Activated T-helper 2 cell treated with anti-CD3 and anti-CD28 coated beads, Interferon-gamma antibody, Interleukin-2, Interleukin-4, amounts not matched to agents 10 μg/mL and 5 μg/mL and 100 μg/mL, durations not matched to agents 14 hours and 24 hours and 36 hours (primary cell): ENCODE measurements at regions of chr5 and their contacts with region 1.

Region 1: GRCh38 chr5:115460472-115460871 is 84.1 kb downstream of the FEM1C start:
- DNase-seq: no peak
- H3K4me3 Mint-ChIP-seq: no peak overlapping the region
- H3K27ac Mint-ChIP-seq: no peak overlapping the region
- H3K4me1 Mint-ChIP-seq: peaks cover 6% of the 10 kb centered on the region
- H3K27me3 Mint-ChIP-seq: peaks cover 34% of the 10 kb centered on the region

Region 2: GRCh38 chr5:115377468-115378217 is 82.8 kb before region 1 on chr5:
- intact Hi-C with region 1: loop called (anchors 2 kb)
- DNase-seq: no peak
- H3K4me3 Mint-ChIP-seq: no peak overlapping the region
- H3K27ac Mint-ChIP-seq: no peak overlapping the region
- H3K4me1 Mint-ChIP-seq: peaks cover 20% of the 10 kb centered on the region
- H3K27me3 Mint-ChIP-seq: no peaks in the 10 kb centered on the region

Region 3: DNA sequence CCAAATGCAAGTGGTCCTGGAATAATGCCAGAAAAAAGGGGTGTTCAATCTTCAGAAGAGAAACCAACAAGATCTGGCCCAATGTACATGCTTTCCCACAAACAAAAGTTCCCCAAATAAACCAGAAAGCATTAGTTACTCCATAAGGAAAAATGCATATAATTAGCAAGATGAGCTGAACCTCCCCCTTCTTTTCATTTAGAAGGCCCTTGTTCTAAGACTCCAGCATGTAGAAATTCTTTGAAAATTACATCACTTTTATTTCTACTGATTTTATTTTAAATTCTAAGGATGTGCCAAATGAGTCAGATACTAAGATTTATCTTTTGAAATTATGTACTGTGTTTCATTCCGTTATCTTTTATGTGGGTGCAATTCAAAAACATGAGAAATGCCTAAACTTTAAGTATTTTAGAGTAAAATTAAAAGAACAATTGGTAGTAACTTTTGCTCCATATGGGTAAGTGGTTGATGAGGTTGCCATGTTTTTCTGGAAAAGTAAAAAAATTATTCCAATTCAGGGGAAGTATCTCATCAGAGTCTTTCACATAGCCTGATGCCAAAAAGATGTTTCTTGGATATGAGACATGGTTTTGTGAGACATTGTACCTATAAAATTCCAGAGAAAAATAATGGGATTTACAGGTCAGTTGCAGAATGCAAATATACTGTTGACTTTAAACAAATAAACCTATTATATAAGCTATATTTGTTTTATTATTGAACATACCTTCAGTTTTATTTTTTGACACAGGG is 57.5 kb before region 1 on chr5:
- intact Hi-C with region 1: no loop called
- DNase-seq: no peak
- H3K4me3 Mint-ChIP-seq: no peak overlapping the region
- H3K27ac Mint-ChIP-seq: no peak overlapping the region
- H3K4me1 Mint-ChIP-seq: no peaks in the 10 kb centered on the region
- H3K27me3 Mint-ChIP-seq: peaks cover 18% of the 10 kb centered on the region

Region 4: GRCh38 chr5:115487756-115488155 is 27.3 kb after region 1 on chr5:
- intact Hi-C with region 1: loop called (anchors 1 kb)
- DNase-seq: no peak
- H3K4me3 Mint-ChIP-seq: no peak overlapping the region
- H3K27ac Mint-ChIP-seq: peak overlapping the region; percentile 70
- H3K4me1 Mint-ChIP-seq: peaks cover 16% of the 10 kb centered on the region
- H3K27me3 Mint-ChIP-seq: peaks cover 5% of the 10 kb centered on the region

Region 5: DNA sequence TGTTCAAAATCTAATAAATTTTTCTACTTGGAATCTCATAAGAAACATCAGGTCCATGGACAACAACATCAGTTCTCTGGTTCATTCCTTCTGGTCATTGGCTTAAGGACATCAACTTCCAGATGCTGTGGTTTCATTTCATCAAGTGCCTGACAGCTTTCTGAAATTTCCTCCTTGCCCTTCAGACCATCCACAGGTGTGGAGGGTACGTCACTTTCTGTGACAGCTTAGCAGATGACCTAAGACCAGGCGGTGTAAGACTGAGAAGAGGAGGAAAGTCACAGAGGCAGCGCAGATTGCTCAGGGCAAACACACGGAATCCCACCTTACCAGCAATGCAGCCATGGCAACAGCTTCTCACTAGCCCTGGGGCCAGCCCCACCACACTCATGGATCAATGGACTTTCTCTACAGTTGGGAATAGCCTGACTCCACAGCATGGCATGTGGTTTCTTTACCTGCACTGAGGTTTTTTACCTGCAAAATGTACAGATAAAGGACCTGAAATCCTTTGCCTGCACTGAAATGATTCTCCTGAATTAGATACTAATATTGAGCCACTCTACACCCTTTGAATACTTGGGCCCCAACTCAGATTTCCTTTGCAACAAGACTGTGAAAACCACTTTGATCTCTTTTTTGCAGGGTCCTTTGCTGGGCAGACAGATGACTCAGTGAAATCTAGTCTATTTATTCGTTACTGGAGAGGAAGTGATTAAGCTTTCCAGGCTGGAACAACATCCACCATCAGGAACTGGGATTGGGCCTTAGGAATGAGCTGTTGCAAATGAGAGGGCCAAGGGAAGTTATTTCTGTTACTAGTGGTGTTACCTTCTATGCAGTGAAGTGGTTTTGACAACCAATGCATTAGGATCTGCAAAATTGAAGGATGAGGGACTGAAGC is 114.9 kb after region 1 on chr5:
- intact Hi-C with region 1: no loop called
- DNase-seq: no peak
- H3K4me3 Mint-ChIP-seq: no peak overlapping the region
- H3K27ac Mint-ChIP-seq: no peak overlapping the region
- H3K4me1 Mint-ChIP-seq: no peaks in the 10 kb centered on the region
- H3K27me3 Mint-ChIP-seq: peaks cover 21% of the 10 kb centered on the region

Region 6: DNA sequence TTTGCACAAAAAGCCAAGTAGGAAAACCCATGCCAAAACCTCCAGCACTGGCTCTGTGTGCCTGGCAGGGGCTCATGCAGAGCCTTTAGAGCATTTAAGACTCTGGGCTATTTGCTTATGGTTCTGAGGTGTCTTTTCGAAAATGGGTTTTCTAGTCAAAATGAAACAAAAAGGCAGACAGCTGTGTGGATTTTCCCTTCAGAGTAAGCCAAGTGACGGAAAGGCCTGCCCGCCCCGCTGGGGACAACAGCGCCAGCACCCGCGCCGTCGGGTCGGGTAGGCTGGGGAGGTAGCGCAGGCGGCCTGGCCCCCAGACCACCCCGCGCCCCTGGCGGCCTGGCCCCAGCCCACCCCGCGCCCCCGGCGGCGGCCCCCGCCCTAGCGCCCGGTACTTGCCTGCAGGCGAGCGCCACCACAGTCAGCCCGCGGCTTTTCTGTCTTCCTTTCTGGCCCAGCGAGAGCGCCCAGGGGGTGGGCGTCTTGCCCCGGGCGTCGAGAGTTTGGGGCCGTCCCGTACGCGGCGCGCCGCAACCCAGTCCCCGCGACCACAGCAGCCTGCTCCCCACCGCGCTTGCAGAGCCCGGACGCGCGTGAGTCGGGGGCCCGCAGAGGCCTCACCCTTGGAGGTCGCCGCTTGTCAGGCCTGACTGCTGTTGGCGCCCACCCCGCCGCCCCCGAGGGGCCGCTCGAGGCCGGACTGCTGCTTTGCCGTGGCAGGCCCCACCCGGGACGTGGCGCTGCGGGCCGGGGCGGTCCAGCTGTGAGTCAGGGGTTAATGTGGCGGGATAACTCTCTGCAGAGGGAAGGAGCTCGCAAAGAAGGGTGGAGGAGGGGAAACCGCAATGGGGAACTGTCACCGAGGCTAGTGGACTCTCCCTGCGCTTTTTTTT is 141.5 kb after region 1 on chr5 and contains the start of gene TICAM2:
- intact Hi-C with region 1: loop called (anchors 1 kb)
- DNase-seq: peak; percentile 48
- H3K4me3 Mint-ChIP-seq: peak within 1 kb of the TSS; percentile 68
- H3K27ac Mint-ChIP-seq: peak within 1 kb of the TSS; percentile 67
- H3K4me1 Mint-ChIP-seq: peaks cover 24% of the 10 kb centered on the region
- H3K27me3 Mint-ChIP-seq: peaks cover 6% of the 10 kb centered on the region
- total RNA-seq, gene TICAM2: 0.85 TPM in 1 of 2 replicates, not detected in the other